ENCODE measurements at regions of chr15 and their contacts with region 1.

Region 1: GRCh38 chr15:83011271-83012075 is at the start of gene C15orf40:
- DNase-seq: peak; percentile 71
- ATAC-seq: peak; percentile 93
- H3K4me3 ChIP-seq: peak within 1 kb of the TSS; percentile 78
- H3K27ac ChIP-seq: peak within 1 kb of the TSS; percentile 72
- H3K4me1 ChIP-seq: peaks cover 6% of the 10 kb centered on the region; the same call in 1 of the 2 replicates
- H3K27me3 ChIP-seq: no peaks in the 10 kb centered on the region
- CTCF ChIP-seq: peak; percentile 76 to 94 (median 79)
- EP300 ChIP-seq: peak in 1 of 2 experiments; percentile 51; a peak in 1 of 4 replicates
- POLR2A ChIP-seq: peak; percentile 95
- RAD21 ChIP-seq: peak; percentile 21; the same call in 1 of the 2 replicates
- polyA plus RNA-seq, gene C15orf40: 59.9 to 70.0 TPM

Region 2: GRCh38 chr15:82909080-82909815 is 102.2 kb before region 1 on chr15:
- CTCF ChIA-PET with region 1: no interaction called
- POLR2A ChIA-PET with region 1: no interaction called
- RAD21 ChIA-PET with region 1: no interaction called
- SMC1A ChIA-PET with region 1: no interaction called
- in situ Hi-C with region 1: no loop called
- intact Hi-C with region 1: no loop called
- DNase-seq: no peak
- ATAC-seq: no peak
- H3K4me3 ChIP-seq: no peak overlapping the region
- H3K27ac ChIP-seq: no peak overlapping the region
- H3K4me1 ChIP-seq: no peaks in the 10 kb centered on the region
- H3K27me3 ChIP-seq: no peaks in the 10 kb centered on the region; a peak in 1 of 4 replicates
- CTCF ChIP-seq: no peak
- EP300 ChIP-seq: no peak
- POLR2A ChIP-seq: no peak
- RAD21 ChIP-seq: no peak

Region 3: DNA sequence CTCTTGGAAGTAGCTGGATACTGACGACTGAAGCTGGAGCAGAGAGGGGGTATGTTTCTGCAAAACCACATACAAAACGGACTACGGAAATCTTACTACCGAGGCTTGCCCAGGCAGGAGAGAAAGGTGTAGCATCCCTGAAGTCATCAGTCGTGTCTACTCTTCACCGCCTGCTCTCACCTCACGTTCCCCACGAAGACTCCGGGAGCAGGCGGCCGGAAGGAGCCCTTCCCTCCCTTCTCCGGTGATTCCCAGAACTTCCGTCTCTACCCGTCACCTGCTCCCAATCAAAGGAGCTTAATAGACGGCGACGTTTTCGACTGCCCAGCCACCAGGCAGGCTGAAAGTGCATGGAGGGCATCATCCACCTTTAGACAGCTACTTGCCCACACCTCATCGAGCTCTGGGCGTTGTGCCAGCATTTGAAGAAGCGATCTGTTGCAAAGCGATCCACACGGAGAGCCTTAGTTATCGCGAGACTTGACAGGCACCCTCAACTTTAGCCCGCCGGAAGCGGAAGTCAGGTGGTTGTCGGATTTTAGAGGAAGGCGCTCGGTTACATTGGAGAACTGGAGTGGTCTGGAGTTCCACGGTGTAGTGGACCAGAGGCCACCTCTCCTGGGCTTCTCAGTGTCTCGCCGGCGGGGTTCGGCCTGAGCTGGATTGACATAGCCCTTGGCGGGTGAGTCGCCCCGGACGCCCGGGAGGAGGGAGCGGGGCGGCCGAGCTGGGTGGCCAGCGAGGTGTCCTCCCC is 25.6 kb before region 1 on chr15 and contains the start of gene RAMAC:
- CTCF ChIA-PET with region 1: interaction called, 12 read pairs
- POLR2A ChIA-PET with region 1: interaction called, 4 read pairs
- RAD21 ChIA-PET with region 1: no interaction called
- SMC1A ChIA-PET with region 1: interaction called, 10 read pairs
- in situ Hi-C with region 1: no loop called
- intact Hi-C with region 1: no loop called
- DNase-seq: peak; percentile 93
- ATAC-seq: peak; percentile 97
- H3K4me3 ChIP-seq: peak within 1 kb of the TSS; percentile 84
- H3K27ac ChIP-seq: peak within 1 kb of the TSS; percentile 71
- H3K4me1 ChIP-seq: peaks cover 8% of the 10 kb centered on the region
- H3K27me3 ChIP-seq: no peaks in the 10 kb centered on the region
- CTCF ChIP-seq: no peak
- EP300 ChIP-seq: no peak
- POLR2A ChIP-seq: peak; percentile 88
- RAD21 ChIP-seq: no peak
- polyA plus RNA-seq, gene RAMAC: 79.3 to 109 TPM

Region 4: DNA sequence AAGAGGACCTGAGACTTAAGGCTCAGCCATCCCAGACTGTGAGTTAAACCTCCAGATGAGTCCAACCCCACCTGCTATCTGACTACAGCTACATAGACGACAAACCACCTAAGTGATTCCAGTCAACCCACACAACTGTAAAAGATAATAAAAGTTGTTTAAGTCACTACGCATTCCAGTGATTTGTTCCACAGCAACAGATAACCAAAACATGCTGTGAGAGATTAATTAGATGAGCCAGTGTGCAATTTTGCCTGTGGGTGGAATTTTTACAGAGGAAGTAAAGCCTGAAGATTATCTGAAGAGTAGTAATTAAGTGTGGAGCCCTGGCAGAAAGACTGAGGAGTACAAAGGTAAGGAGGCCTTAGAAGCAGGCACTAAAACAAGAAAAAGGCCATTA is 50.2 kb after region 1 on chr15:
- CTCF ChIA-PET with region 1: interaction called, 9 read pairs
- POLR2A ChIA-PET with region 1: interaction called, 10 read pairs
- RAD21 ChIA-PET with region 1: interaction called, 3 read pairs
- SMC1A ChIA-PET with region 1: interaction called, 7 read pairs
- in situ Hi-C with region 1: no loop called
- intact Hi-C with region 1: loop called (anchors 5 kb)
- DNase-seq: no peak
- ATAC-seq: peak; percentile 4; the same call in 2 of the 3 replicates
- H3K4me3 ChIP-seq: peak overlapping the region; percentile 96
- H3K27ac ChIP-seq: peak overlapping the region; percentile 0; the same call in 1 of the 2 replicates
- H3K4me1 ChIP-seq: peaks cover 14% of the 10 kb centered on the region
- H3K27me3 ChIP-seq: no peaks in the 10 kb centered on the region
- CTCF ChIP-seq: no peak
- EP300 ChIP-seq: no peak
- POLR2A ChIP-seq: no peak
- RAD21 ChIP-seq: no peak

Region 5: DNA sequence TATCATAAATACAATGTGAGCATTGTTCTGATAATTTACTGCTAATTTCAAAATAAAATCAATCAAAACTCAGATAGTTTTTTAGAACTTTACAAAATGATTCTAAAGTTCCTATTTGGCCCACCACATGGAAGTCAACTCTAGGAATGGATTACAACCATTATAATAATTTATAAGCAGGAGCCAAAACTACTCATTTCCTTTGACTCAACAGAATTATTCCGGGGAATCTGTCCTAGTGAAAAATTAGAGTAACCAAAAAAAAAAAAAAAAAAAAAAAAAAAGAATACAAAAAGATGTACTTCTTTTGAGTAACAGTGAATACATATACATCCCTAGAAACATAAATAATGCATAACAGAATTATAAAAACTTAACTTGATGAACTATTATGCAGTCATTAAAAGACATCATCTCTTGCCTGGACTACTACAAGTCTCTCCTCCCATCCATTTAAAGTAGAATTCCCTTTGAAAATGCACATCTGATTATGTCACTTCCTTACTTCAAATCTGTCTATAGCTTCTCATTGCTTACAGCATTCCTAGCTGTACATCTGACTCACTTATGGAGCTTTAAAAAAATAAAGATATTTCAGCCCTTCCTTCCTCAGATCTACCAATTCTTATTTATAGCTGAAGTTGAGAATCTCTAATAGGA is 152.8 kb after region 1 on chr15:
- CTCF ChIA-PET with region 1: interaction called, 11 read pairs
- POLR2A ChIA-PET with region 1: no interaction called
- RAD21 ChIA-PET with region 1: no interaction called
- SMC1A ChIA-PET with region 1: no interaction called
- in situ Hi-C with region 1: no loop called
- intact Hi-C with region 1: no loop called
- DNase-seq: no peak
- ATAC-seq: no peak
- H3K4me3 ChIP-seq: no peak overlapping the region
- H3K27ac ChIP-seq: no peak overlapping the region
- H3K4me1 ChIP-seq: no peaks in the 10 kb centered on the region
- H3K27me3 ChIP-seq: no peaks in the 10 kb centered on the region
- CTCF ChIP-seq: no peak
- EP300 ChIP-seq: no peak
- POLR2A ChIP-seq: no peak
- RAD21 ChIP-seq: no peak

Region 6: GRCh38 chr15:83380682-83381081 is 369.2 kb after region 1 on chr15:
- CTCF ChIA-PET with region 1: interaction called, 12 read pairs
- POLR2A ChIA-PET with region 1: no interaction called
- RAD21 ChIA-PET with region 1: interaction called, 5 read pairs
- SMC1A ChIA-PET with region 1: interaction called, 5 read pairs
- in situ Hi-C with region 1: no loop called
- intact Hi-C with region 1: loop called (anchors 2 kb)
- DNase-seq: peak; percentile 13
- ATAC-seq: peak; percentile 98
- H3K4me3 ChIP-seq: no peak overlapping the region
- H3K27ac ChIP-seq: no peak overlapping the region
- H3K4me1 ChIP-seq: peaks cover 5% of the 10 kb centered on the region
- H3K27me3 ChIP-seq: peaks cover 0 to 6% of the 10 kb centered on the region in 2 experiments; a peak in 3 of 4 replicates
- CTCF ChIP-seq: peak; percentile 68 to 76 (median 74)
- EP300 ChIP-seq: no peak
- POLR2A ChIP-seq: no peak
- RAD21 ChIP-seq: peak; percentile 73

Measured in GM12878 (cell line).